GM23248 (cell line): ENCODE measurements at regions of chr2 and their contacts with region 1.

Region 1: GRCh38 chr2:203683932-203684556 is 22.4 kb upstream of the CD28 start:
- DNase-seq: peak; percentile 95
- H3K4me3 ChIP-seq: no peak overlapping the region
- H3K27ac ChIP-seq: peak overlapping the region; percentile 100
- H3K4me1 ChIP-seq: peaks cover 78% of the 10 kb centered on the region
- H3K27me3 ChIP-seq: no peaks in the 10 kb centered on the region

Region 2: GRCh38 chr2:203804070-203804469 is 120.0 kb after region 1 on chr2:
- in situ Hi-C with region 1: loop called (anchors 10 kb)
- DNase-seq: peak; percentile 99
- H3K4me3 ChIP-seq: no peak overlapping the region; the same call in 1 of the 2 replicates
- H3K27ac ChIP-seq: peak overlapping the region; percentile 99
- H3K4me1 ChIP-seq: peaks cover 73% of the 10 kb centered on the region
- H3K27me3 ChIP-seq: no peaks in the 10 kb centered on the region